Pancreas (tissue), 10 donors: ENCODE measurements at regions of chr17 and their contacts with region 1.

Region 1: GRCh38 chr17:21119247-21119918 is 7.4 kb upstream of the DHRS7B start:
- DNase-seq: peak in 5 of 6 donors; percentile 47 to 74 (median 57)
- ATAC-seq: peak; percentile 66 to 96 (median 92)
- H3K4me3 ChIP-seq: no peak overlapping the region
- H3K27ac ChIP-seq: peak overlapping the region in 1 of 4 donors; percentile 46
- H3K4me1 ChIP-seq: peaks cover 0 to 4% (median 0%) of the 10 kb centered on the region in 3 donors
- H3K27me3 ChIP-seq: no peaks in the 10 kb centered on the region
- CTCF ChIP-seq: peak; percentile 59 to 83 (median 76)

Region 2: DNA sequence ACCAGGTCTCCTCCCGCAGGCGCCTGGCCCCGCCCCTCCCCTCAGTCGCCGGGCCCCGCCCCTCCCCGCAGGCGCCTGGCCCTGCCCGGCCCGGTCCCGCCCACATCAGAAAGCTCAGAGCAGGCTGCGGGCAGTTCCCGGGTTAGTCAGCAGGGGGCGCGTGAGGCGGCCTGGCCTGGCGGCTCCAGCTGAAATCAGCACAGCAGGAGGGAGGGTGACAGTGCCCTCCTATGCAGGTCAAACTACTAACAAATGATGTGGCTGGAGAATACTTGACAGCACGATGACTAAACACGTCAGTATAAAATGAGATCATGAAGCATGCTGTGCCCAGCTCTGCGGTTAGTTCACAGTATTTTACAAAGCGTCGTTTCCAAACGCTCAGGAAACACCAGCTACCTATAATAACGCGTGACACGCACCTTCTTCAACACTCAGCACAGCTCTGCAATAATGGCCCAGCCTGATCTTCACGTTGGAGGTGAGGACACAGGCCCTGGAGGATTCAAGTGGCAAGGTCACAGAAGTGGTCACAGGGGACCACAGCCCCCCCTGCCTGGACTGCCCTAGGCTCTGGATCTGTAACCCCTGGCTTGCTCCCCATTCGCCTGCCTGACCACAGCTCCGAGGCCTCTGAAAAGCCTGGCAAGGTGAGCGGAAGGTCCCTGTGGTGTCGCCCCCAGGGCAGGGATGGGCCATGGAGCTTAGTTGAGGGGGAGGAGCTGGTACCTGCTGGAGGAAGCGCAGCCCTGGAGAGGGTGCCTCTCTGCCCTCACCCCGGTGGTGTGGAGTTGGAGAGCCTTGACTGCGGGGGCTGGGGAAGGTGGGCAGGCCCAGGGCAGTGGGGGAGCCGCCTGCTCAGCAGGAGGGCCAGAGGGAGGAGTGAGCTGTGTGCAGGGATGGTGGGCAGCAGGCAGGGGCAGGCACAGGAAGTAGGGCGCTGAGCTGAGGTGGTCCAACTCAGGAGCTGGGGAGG is 338.0 kb after region 1 on chr17:
- intact Hi-C with region 1: loop called in 1 of 3 experiments (anchors 5 kb)
- DNase-seq: peak; percentile 85 to 98 (median 95)
- ATAC-seq: peak; percentile 95 to 98 (median 97)
- H3K4me3 ChIP-seq: no peak overlapping the region
- H3K27ac ChIP-seq: no peak overlapping the region
- H3K4me1 ChIP-seq: peaks cover 0 to 5% (median 3%) of the 10 kb centered on the region in 3 donors
- H3K27me3 ChIP-seq: peaks cover 0 to under 1% (median 0%) of the 10 kb centered on the region in 4 donors
- CTCF ChIP-seq: peak; percentile 97 to 99 (median 98)